Activated CD4-positive, alpha-beta T cell treated with anti-CD3 and anti-CD28 coated beads for 36 hours (primary cell): ENCODE measurements at regions of chr22 and their contacts with region 1.

Region 1: GRCh38 chr22:31661851-31662656 is at the start of gene PISD:
- DNase-seq: peak; percentile 98
- ATAC-seq: peak; percentile 89
- H3K4me3 Mint-ChIP-seq: peak within 1 kb of the TSS; percentile 84
- H3K27ac Mint-ChIP-seq: peak within 1 kb of the TSS; percentile 94
- H3K4me1 Mint-ChIP-seq: peaks cover 30% of the 10 kb centered on the region
- H3K27me3 Mint-ChIP-seq: peaks cover 2% of the 10 kb centered on the region
- total RNA-seq, gene PISD: 30.3 to 37.9 TPM

Region 2: DNA sequence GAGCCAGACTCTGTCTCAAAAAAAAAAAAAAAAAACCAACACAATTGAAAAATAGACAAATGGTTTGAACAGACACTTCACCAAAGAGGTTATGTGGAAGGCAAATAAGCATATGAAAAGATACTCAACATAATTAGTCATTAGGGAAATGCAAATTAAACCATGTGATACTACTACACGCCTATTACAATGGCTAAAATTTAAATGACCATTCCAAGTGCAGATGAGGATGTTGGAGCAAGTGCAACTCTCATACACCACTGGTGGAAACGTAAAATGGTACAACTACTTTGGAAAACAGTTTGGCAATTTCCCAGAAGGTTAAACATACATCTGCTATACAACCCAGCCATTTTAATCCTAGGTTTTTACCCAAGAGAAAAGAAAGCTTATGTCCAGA is 196.7 kb before region 1 on chr22:
- CTCF ChIA-PET with region 1: interaction called, 4 read pairs
- POLR2A ChIA-PET with region 1: interaction called, 10 read pairs
- intact Hi-C with region 1: no loop called
- DNase-seq: no peak
- ATAC-seq: no peak
- H3K4me3 Mint-ChIP-seq: no peak overlapping the region
- H3K27ac Mint-ChIP-seq: no peak overlapping the region
- H3K4me1 Mint-ChIP-seq: peaks cover 2% of the 10 kb centered on the region
- H3K27me3 Mint-ChIP-seq: no peaks in the 10 kb centered on the region

Region 3: DNA sequence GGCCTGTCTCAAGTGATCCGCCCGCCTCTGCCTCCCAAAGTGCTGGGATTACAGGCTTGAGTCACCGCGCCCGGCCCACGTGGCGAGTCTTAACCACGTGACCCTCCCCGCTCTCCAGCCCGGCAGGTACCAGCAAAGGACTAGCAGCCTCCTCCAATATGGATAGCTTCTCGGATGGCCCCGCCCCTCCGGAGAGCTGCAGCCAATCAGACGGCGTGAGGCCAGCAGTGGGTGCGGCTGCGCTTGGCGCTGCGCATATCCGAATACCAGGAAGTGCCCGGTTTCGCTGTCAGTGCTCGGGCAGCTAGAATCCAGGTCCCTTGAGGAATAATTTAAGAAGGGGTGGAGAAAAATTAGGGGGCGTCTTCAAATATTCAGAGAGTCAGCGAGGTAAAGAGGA is 14.6 kb after region 1 on chr22:
- CTCF ChIA-PET with region 1: interaction called, 30 read pairs
- POLR2A ChIA-PET with region 1: interaction called, 12 read pairs
- intact Hi-C with region 1: loop called in 1 of 2 experiments (anchors 1 kb)
- DNase-seq: peak; percentile 95
- ATAC-seq: peak; percentile 100
- H3K4me3 Mint-ChIP-seq: peak overlapping the region; percentile 76
- H3K27ac Mint-ChIP-seq: peak overlapping the region; percentile 89
- H3K4me1 Mint-ChIP-seq: peaks cover 13% of the 10 kb centered on the region
- H3K27me3 Mint-ChIP-seq: no peaks in the 10 kb centered on the region

Region 4: DNA sequence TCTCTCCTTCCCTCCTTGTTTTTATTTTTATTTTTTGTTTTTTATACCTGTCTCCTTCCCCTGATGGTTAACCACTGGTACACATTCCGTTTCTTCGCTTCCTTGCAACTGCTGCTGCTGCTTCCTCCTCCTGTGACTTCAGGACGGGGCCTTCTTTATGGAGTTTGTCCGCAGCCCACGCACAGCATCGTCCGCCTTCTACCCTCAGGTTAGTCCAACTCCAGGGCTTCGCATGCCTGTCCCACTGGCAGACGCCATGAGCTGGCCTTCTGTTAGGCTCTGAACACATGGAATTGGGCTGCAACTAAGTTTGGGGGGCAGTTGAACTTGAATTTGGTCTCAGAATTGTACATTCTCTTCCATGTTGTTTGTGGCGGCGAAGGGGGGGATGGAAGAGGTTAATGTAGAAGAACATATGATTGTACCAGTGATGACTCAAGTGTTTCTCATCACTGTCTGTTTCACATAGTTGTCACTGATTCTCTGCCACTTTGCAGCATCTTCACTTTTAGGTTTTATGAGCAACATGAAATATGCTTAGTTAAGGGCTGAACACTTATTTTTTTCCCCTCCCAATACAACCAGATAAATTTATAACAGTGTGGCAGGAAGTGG is 199.3 kb after region 1 on chr22:
- CTCF ChIA-PET with region 1: no interaction called
- POLR2A ChIA-PET with region 1: no interaction called
- intact Hi-C with region 1: loop called in 1 of 2 experiments (anchors 10 kb)
- DNase-seq: peak; percentile 51
- ATAC-seq: peak; percentile 88
- H3K4me3 Mint-ChIP-seq: no peak overlapping the region
- H3K27ac Mint-ChIP-seq: no peak overlapping the region
- H3K4me1 Mint-ChIP-seq: peaks cover 7% of the 10 kb centered on the region
- H3K27me3 Mint-ChIP-seq: no peaks in the 10 kb centered on the region

Region 5: GRCh38 chr22:31970490-31971444 is 308.7 kb after region 1 on chr22:
- CTCF ChIA-PET with region 1: interaction called, 30 read pairs
- POLR2A ChIA-PET with region 1: no interaction called
- intact Hi-C with region 1: loop called (anchors 1 to 5 kb)
- DNase-seq: peak; percentile 93
- ATAC-seq: peak; percentile 95
- H3K4me3 Mint-ChIP-seq: peak overlapping the region; percentile 57
- H3K27ac Mint-ChIP-seq: peak overlapping the region; percentile 37
- H3K4me1 Mint-ChIP-seq: peaks cover 11% of the 10 kb centered on the region
- H3K27me3 Mint-ChIP-seq: no peaks in the 10 kb centered on the region

Region 6: DNA sequence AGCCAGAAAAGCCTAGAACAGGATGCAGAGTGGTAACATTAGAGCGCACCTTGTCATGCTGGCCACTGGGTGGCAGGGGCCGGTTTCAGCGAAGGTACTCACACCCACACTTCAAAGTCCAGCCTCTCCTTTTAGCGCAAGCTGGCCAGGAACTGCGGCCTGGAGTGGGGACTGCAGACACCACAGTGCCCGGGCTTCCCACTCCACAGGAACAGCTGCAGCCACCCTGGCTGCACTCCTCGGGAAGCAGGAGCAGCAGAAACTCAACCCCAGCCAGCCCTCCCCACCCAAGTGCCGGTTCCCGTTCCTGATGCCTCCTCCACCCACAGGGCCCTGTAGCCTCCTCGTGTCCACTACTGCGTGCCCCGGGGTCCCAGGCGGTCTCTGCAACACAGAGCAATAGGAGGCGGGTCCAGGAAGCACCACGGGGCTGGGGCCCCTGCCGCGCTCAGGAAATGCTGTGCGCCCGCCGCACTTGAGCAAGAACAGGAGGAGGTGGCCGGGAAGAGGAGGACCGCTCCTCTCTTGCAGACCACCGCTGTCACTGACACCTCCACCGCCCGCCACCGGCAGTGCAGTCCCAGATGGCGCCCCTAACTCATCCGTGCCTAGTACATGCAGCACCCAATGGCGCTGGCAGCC is 540.6 kb after region 1 on chr22:
- CTCF ChIA-PET with region 1: no interaction called
- POLR2A ChIA-PET with region 1: no interaction called
- intact Hi-C with region 1: loop called in 1 of 2 experiments (anchors 10 kb)
- DNase-seq: peak; percentile 59
- ATAC-seq: peak; percentile 55
- H3K4me3 Mint-ChIP-seq: peak overlapping the region; percentile 63
- H3K27ac Mint-ChIP-seq: no peak overlapping the region
- H3K4me1 Mint-ChIP-seq: peaks cover 21% of the 10 kb centered on the region
- H3K27me3 Mint-ChIP-seq: peaks cover 18% of the 10 kb centered on the region